HepG2 (cell line): ENCODE measurements at regions of chr11 and their contacts with region 1.

Region 1: GRCh38 chr11:66638177-66639065 is at the start of gene RBM4:
- DNase-seq: peak; percentile 99
- ATAC-seq: peak; percentile 93
- H3K4me3 ChIP-seq: peak within 1 kb of the TSS; percentile 87 to 96 (median 90)
- H3K27ac ChIP-seq: peak within 1 kb of the TSS; percentile 95
- H3K4me1 ChIP-seq: peaks cover 63% of the 10 kb centered on the region
- H3K27me3 ChIP-seq: no peaks in the 10 kb centered on the region; a peak in 1 of 5 replicates
- CTCF ChIP-seq: peak; percentile 29; the same call in 1 of the 2 replicates
- EP300 ChIP-seq: no peak
- POLR2A ChIP-seq: peak; percentile 83 to 94
- RAD21 ChIP-seq: 0 out of 2 replicates have a peak, but pooled peaks have one; percentile 24
- total RNA-seq, gene RBM4: 136 and 138 TPM in 2 replicates

Region 2: DNA sequence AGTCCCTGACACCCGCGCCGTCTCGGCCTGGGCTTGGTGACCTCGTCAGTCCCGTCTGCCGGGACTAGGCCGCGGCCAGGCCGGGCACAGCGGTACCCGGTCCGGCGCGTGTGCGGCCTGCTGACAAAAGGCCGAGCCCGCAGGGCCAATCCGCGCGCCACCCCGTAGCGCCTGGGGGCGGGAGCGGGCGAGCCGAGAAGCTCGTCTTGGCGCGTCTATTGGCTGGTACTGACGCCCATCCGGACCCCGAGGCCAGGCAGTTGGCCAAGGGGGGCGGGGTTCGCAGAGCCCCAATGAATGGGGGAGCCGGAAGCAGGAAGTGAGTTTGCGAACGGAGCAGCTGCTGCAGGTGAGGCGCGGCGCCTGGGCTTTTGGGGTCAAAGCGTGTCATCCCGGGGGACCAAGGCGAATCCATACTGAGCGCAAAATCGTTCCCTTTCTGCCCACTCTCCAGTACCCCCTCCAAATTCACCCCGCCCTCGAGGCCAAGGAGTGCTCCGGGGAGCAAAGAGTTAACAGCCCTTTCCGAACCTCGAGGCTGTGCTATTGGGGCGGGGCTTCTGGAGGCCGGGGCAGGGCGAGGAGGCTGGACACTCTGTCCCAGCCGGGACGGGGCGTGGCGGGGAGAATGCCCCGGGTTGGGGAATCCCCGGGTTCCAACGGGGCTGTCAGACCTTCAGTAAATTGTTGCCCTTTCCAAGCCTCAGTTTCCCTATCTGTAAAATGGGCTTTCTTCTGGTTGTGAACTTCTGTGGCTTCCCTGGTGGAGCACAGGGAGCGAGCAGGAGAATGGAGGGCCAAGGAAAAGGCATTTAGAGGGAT is 158.1 kb before region 1 on chr11 and contains the start of gene DPP3:
- CTCF ChIA-PET with region 1: no interaction called
- POLR2A ChIA-PET with region 1: interaction called, 10 read pairs
- in situ Hi-C with region 1: no loop called
- intact Hi-C with region 1: no loop called
- DNase-seq: peak; percentile 93
- ATAC-seq: peak; percentile 93
- H3K4me3 ChIP-seq: peak within 1 kb of the TSS; percentile 70 to 93 (median 92)
- H3K27ac ChIP-seq: peak within 1 kb of the TSS; percentile 87
- H3K4me1 ChIP-seq: peaks cover 50% of the 10 kb centered on the region
- H3K27me3 ChIP-seq: no peaks in the 10 kb centered on the region
- CTCF ChIP-seq: peak; percentile 18; the same call in 1 of the 2 replicates
- EP300 ChIP-seq: no peak
- POLR2A ChIP-seq: peak; percentile 85 to 93
- RAD21 ChIP-seq: no peak; the same call in 1 of the 2 replicates
- total RNA-seq, gene DPP3: 48.7 and 59.8 TPM in 2 replicates

Region 3: DNA sequence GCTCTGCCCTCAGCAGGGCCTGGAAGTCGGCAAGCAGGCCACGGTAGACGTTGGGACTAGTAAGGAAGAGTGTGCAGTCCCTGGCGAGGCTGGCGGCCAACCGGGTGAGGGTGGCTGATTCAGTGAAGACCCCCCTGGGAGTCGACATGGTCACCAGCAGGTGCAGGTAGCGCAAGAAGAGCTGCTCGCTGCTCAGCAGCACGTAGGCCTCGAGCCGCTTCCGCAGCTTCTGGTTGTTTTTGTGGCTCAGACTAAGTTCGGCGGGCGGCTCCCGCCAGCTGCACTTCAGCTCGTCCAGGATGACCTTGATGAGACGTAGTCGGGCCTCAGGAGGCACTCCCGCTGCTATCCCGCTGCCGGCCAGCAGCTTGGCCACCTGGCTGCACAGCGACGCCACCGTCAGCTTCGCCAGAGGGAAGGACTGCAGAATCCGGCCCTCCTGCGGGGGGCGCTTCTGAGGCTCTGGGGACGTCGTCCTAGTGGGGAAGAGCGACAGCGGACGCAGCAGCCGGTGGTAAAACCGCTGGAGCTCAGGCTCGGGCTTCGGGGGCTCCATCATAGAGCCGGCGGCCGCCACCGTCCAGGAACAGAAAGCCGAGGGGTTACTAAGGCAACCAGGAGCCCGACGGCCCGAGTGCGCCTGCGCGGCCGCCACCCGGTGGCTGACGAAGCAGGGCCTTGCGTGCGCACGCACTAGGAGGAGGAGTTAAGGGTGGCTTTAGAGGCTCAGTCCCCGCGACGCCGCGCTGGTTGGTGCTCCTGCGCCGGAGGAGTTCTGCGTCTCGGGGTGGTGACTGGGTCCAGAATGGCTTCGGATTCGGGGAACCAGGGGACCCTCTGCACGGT is 45.7 kb before region 1 on chr11 and contains the starts of genes CCDC87 and CCS:
- CTCF ChIA-PET with region 1: no interaction called
- POLR2A ChIA-PET with region 1: interaction called, 45 read pairs
- in situ Hi-C with region 1: no loop called
- intact Hi-C with region 1: loop called (anchors 2 kb)
- DNase-seq: peak; percentile 93
- ATAC-seq: peak; percentile 89
- H3K4me3 ChIP-seq: peak within 1 kb of the TSS; percentile 71 to 94 (median 76)
- H3K27ac ChIP-seq: peak within 1 kb of the TSS; percentile 78
- H3K4me1 ChIP-seq: peaks cover 72% of the 10 kb centered on the region
- H3K27me3 ChIP-seq: no peaks in the 10 kb centered on the region; a peak in 1 of 5 replicates
- CTCF ChIP-seq: peak; percentile 85
- EP300 ChIP-seq: no peak
- POLR2A ChIP-seq: peak; percentile 89 to 99
- RAD21 ChIP-seq: peak; percentile 91
- total RNA-seq, gene CCDC87: 0.17 and 0.42 TPM in 2 replicates
- total RNA-seq, gene CCS: 34.2 and 44.6 TPM in 2 replicates

Region 4: DNA sequence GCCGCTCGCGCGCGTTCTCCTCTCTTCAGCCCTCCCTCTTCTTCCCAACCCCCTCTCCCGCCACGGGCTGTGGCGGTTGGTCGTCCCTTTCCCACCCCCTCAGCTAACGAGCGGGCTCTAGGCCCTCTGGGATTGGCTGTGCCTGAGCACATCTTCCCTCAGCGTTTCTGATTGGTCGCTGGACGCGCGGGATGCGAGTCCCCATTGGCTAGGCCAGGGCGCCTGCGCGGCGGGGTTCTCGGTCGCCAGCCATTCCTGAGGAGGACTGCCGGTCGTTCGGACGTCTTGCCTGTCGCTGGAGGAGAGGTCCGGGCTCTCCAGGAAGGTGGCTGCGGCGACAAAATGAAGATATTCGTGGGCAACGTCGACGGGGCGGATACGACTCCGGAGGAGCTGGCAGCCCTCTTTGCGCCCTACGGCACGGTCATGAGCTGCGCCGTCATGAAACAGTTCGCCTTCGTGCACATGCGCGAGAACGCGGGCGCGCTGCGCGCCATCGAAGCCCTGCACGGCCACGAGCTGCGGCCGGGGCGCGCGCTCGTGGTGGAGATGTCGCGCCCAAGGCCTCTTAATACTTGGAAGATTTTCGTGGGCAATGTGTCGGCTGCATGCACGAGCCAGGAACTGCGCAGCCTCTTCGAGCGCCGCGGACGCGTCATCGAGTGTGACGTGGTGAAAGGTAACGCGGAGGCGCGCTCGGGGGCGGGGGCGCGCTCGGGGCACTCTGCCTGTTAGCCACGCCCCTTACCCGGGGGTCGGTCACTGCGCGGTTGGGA is 21.9 kb before region 1 on chr11 and contains the start of gene RBM14:
- CTCF ChIA-PET with region 1: no interaction called
- POLR2A ChIA-PET with region 1: interaction called, 211 read pairs
- in situ Hi-C with region 1: no loop called
- intact Hi-C with region 1: no loop called
- DNase-seq: peak; percentile 99
- ATAC-seq: peak; percentile 96
- H3K4me3 ChIP-seq: peak within 1 kb of the TSS; percentile 89 to 93 (median 92)
- H3K27ac ChIP-seq: peak within 1 kb of the TSS; percentile 89
- H3K4me1 ChIP-seq: peaks cover 44% of the 10 kb centered on the region
- H3K27me3 ChIP-seq: no peaks in the 10 kb centered on the region; a peak in 1 of 5 replicates
- CTCF ChIP-seq: no peak; the same call in none of the 2 replicates
- EP300 ChIP-seq: peak in 1 of 2 experiments; percentile 30; a peak in 1 of 4 replicates
- POLR2A ChIP-seq: peak; percentile 99
- RAD21 ChIP-seq: 0 out of 2 replicates have a peak, but pooled peaks have one; percentile 15
- total RNA-seq, gene RBM14: 41.7 and 44.1 TPM in 2 replicates

Region 5: GRCh38 chr11:66651016-66651415 is 12.6 kb after region 1 on chr11:
- CTCF ChIA-PET with region 1: no interaction called
- POLR2A ChIA-PET with region 1: interaction called, 43 read pairs
- in situ Hi-C with region 1: no loop called
- intact Hi-C with region 1: no loop called
- DNase-seq: no peak
- ATAC-seq: no peak
- H3K4me3 ChIP-seq: no peak overlapping the region
- H3K27ac ChIP-seq: no peak overlapping the region
- H3K4me1 ChIP-seq: peaks cover 12% of the 10 kb centered on the region; the same call in 1 of the 2 replicates
- H3K27me3 ChIP-seq: no peaks in the 10 kb centered on the region
- CTCF ChIP-seq: no peak
- EP300 ChIP-seq: no peak
- POLR2A ChIP-seq: no peak
- RAD21 ChIP-seq: no peak